CD4-positive, alpha-beta T cell (primary cell): ENCODE measurements at regions of chr2 and their contacts with region 1.

Region 1: DNA sequence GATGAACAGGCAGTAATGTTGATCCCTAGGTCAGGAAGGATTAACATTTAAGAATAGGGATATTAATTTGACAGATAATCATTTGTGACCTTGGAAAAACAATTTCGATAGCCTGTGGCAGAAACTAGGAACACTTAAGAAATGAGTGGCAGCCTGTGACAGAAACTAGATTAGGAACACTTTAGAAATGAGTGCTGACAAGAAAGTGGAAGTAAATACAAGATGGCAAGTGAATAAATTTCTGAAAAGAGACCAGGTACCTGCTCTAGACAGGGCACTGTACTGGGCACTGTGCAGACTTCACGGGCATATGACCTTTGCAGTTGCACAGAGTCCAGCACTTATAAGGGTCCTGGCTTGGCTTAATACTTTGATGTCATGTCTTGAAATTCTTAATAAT is 5.5 kb upstream of the HNRNPA3 start:
- DNase-seq: no peak
- ATAC-seq: no peak
- H3K4me3 ChIP-seq: no peak overlapping the region
- H3K4me3 Mint-ChIP-seq: no peak overlapping the region
- H3K27ac ChIP-seq: no peak overlapping the region
- H3K27ac Mint-ChIP-seq: peak overlapping the region; percentile 15
- H3K4me1 ChIP-seq: peaks cover 15% of the 10 kb centered on the region
- H3K4me1 Mint-ChIP-seq: peaks cover 16% of the 10 kb centered on the region
- H3K27me3 ChIP-seq: no peaks in the 10 kb centered on the region
- H3K27me3 Mint-ChIP-seq: no peaks in the 10 kb centered on the region
- CTCF ChIP-seq: no peak

Region 2: GRCh38 chr2:176269319-176270099 is 937.6 kb before region 1 on chr2 and contains the start of gene MTX2:
- CTCF ChIA-PET with region 1: no interaction called
- POLR2A ChIA-PET with region 1: no interaction called
- intact Hi-C with region 1: loop called in 1 of 2 experiments (anchors 5 kb)
- DNase-seq: peak; percentile 32 to 81 (median 62)
- ATAC-seq: peak; percentile 87
- H3K4me3 ChIP-seq: peak within 1 kb of the TSS; percentile 94
- H3K4me3 Mint-ChIP-seq: peak within 1 kb of the TSS; percentile 98
- H3K27ac ChIP-seq: peak within 1 kb of the TSS; percentile 56 to 68
- H3K27ac Mint-ChIP-seq: peak within 1 kb of the TSS; percentile 82
- H3K4me1 ChIP-seq: peaks cover 6% of the 10 kb centered on the region
- H3K4me1 Mint-ChIP-seq: peaks cover 49% of the 10 kb centered on the region
- H3K27me3 ChIP-seq: peaks cover 0 to 7% of the 10 kb centered on the region in 2 experiments
- H3K27me3 Mint-ChIP-seq: peaks cover 6% of the 10 kb centered on the region
- CTCF ChIP-seq: no peak
- total RNA-seq, gene MTX2: 5.0 to 5.2 TPM

Region 3: DNA sequence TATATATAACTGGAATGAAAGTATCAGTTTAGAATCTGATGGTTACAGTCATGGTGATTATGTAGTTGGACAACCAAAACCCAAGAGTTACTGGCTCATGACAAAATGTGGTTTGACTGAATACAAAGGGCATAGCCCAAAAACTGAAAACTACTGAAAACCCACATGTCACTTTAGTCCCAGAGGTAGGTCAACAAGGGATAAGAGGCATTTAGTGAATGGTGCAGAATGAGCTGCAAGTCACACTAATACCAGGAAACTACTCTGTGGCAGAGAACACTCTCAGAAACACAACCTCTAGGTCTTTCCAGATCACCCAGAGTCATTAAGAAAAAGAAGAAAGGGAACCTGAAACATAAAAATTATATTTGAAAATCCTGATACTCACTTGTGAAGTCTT is 340.0 kb after region 1 on chr2:
- CTCF ChIA-PET with region 1: no interaction called
- POLR2A ChIA-PET with region 1: no interaction called
- intact Hi-C with region 1: loop called in 1 of 2 experiments (anchors 5 kb)
- DNase-seq: no peak
- ATAC-seq: no peak
- H3K4me3 ChIP-seq: no peak overlapping the region
- H3K4me3 Mint-ChIP-seq: no peak overlapping the region
- H3K27ac ChIP-seq: no peak overlapping the region
- H3K27ac Mint-ChIP-seq: no peak overlapping the region
- H3K4me1 ChIP-seq: peaks cover 4% of the 10 kb centered on the region
- H3K4me1 Mint-ChIP-seq: no peaks in the 10 kb centered on the region
- H3K27me3 ChIP-seq: no peaks in the 10 kb centered on the region
- H3K27me3 Mint-ChIP-seq: no peaks in the 10 kb centered on the region
- CTCF ChIP-seq: no peak